Posterior vena cava (tissue), 2 donors: ENCODE measurements at regions of chr9 and their contacts with region 1.

Region 1: DNA sequence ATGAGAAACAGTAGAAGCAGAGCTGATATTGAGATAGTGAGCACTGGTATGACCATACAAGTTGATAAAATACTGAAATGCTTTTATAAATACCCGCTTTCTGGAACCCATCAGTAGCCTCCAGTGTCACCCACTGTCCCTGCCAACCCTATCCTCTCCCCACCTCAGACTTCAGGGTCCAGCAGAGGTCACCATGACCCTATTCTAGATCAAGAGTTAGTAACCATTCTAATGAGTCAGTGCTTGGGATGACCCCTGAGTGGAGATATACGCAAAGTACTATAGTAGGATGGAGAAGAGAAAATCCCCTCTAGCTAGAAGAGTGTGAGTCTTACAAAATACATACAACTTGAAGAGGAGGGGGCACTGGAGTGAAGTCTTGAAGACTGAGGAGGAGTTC is 297.9 kb upstream of the BRINP1 start:
- DNase-seq: no peak

Region 2: DNA sequence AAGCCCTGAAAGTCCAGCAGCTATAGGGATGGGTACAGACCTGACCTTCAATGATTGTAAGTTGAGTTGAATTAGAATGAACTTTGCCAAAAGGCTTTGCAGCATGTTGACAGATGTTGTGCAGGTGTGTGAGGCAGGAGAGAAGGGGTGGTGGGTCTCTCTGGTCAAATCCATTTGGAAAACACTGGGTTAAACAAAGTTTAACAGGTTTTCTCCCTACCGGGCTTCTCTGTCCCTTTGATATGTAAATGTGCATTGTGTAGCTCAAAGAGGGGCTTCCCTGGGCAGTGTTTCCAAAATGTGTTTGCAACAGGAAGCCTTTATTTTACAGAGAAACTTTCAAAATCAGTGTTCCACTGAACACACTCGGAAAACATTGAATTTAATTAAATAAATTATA is 225.8 kb before region 1 on chr9:
- intact Hi-C with region 1: no loop called
- DNase-seq: no peak

Region 3: DNA sequence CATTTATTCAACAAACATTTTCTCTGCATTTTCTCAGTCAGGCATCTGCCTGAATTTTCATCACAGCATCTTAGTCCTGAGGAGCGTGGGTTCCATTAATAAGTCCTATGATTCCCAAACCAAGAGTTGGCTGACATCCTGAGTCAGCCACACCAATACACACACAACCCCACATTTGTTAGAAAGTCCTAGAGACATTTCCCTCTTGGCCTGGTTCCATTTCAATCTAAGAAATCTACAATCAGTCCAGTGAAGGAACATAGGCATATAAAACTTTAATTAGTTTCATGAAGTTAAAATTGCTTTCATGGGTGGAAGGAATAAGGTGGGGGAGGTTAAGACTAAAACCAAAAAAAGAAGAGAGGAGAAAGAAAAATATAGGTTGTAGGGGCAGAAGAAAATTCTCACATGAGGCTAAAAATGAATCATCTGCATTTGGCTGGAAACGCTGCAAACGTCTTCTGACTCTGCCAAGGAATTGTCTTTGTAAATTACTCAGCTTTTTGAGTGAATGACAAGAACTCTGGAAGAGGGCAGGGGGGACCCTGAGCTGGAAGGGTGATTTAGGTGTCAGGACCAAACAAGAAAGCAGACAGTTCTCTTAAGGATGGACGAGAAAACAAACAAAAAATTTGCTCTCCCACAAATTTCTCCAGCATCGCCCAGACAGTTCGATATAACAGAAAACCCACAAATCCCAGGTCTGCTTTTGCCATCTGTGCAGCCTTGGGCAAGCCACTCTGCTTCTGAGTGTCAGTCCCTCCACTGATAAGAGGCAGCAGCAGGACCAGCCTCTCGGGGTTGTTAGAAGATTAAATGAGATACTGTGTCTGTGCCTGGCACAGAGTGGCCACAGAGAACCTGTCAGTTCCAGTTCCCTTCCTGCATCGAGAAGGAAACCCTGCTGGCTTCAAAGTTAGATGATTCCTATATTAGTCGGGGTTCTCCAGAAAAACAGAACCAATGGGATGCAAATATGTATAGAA is 623.1 kb after region 1 on chr9:
- intact Hi-C with region 1: loop called in 1 of 2 experiments (anchors 5 kb)
- DNase-seq: no peak